ENCODE measurements at regions of chr17 and their contacts with region 1.

Region 1: GRCh38 chr17:2087597-2088211 is 32.8 kb downstream of the HIC1 start:
- DNase-seq: peak in 3 of 5 donors; percentile 59 to 68 (median 64)
- ATAC-seq: peak in 2 of 4 donors; percentile 1 to 17
- H3K4me3 ChIP-seq: no peak overlapping the region
- H3K27ac ChIP-seq: peak overlapping the region; percentile 1 to 93 (median 88)
- H3K4me1 ChIP-seq: peaks cover 22 to 96% (median 85%) of the 10 kb centered on the region in 12 donors
- H3K27me3 ChIP-seq: no peaks in the 10 kb centered on the region
- CTCF ChIP-seq: no peak
- POLR2A ChIP-seq: no peak

Region 2: GRCh38 chr17:2025622-2026310 is 61.9 kb before region 1 on chr17:
- intact Hi-C with region 1: no loop called
- DNase-seq: peak; percentile 75 to 85 (median 81)
- ATAC-seq: peak; percentile 38 to 65 (median 58)
- H3K4me3 ChIP-seq: peak overlapping the region; percentile 35 to 85 (median 62)
- H3K27ac ChIP-seq: peak overlapping the region in 11 of 12 donors; percentile 39 to 88 (median 64)
- H3K4me1 ChIP-seq: peaks cover 5 to 51% (median 30%) of the 10 kb centered on the region in 12 donors
- H3K27me3 ChIP-seq: peaks cover 0 to 51% (median 0%) of the 10 kb centered on the region in 9 donors
- CTCF ChIP-seq: peak; percentile 50 to 84 (median 72)
- POLR2A ChIP-seq: no peak

Region 3: DNA sequence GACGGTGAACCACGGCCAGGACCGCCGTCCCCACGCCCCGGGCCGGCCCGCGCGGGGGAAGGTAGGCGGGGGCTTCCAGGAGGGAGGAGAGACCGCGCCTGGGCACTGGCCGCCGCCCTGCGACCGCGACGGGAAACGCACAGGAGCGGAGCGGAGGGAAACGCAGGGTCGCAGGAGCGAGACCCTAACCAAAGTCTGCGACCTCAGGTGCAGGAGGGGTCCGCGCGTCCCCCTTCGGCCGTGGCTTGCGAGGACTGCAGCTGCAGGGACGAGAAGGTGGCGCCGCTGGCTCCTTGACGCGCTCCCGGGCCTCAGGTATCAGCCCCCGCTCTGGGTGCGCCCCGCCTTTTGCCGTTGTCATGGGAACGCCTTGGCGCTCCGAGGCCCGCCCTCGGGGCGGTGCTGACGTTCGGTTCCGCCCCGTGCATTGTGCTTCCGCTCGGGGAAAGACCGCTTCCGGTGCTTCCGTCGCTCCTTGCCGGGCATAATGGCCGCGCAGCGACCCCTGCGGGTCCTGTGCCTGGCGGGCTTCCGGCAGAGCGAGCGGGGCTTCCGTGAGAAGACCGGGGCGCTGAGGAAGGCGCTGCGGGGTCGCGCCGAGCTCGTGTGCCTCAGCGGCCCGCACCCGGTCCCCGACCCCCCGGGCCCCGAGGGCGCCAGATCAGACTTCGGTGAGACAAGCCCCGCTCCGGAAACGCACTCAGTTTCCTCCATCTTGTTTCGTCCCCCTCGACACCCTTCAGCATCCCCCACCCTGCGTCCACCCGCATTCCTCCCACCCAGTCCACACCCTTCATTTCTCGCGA is 45.9 kb before region 1 on chr17 and contains the start of gene OVCA2:
- intact Hi-C with region 1: no loop called
- DNase-seq: peak; percentile 95 to 97 (median 95)
- ATAC-seq: peak; percentile 77 to 96 (median 93)
- H3K4me3 ChIP-seq: peak within 1 kb of the TSS; percentile 43 to 87 (median 76)
- H3K27ac ChIP-seq: peak within 1 kb of the TSS; percentile 81 to 97 (median 93)
- H3K4me1 ChIP-seq: peaks cover 3 to 38% (median 22%) of the 10 kb centered on the region in 12 donors
- H3K27me3 ChIP-seq: no peaks in the 10 kb centered on the region
- CTCF ChIP-seq: peak; percentile 35 to 81 (median 65)
- POLR2A ChIP-seq: peak in 1 of 2 donors; percentile 77
- total RNA-seq, gene OVCA2: 16.0 to 30.2 (median 20.0) TPM

Region 4: GRCh38 chr17:2064980-2065785 is 22.5 kb before region 1 on chr17:
- intact Hi-C with region 1: loop called in 2 of 10 experiments (anchors 2 kb)
- DNase-seq: peak in 4 of 5 donors; percentile 57 to 79 (median 66)
- ATAC-seq: peak in 3 of 4 donors; percentile 8 to 31 (median 17)
- H3K4me3 ChIP-seq: no peak overlapping the region
- H3K27ac ChIP-seq: peak overlapping the region in 11 of 12 donors; percentile 67 to 98 (median 93)
- H3K4me1 ChIP-seq: peaks cover 3 to 94% (median 85%) of the 10 kb centered on the region in 12 donors
- H3K27me3 ChIP-seq: peaks cover 0 to 6% (median 0%) of the 10 kb centered on the region in 9 donors
- CTCF ChIP-seq: peak in 9 of 12 donors; percentile 5 to 56 (median 23)
- POLR2A ChIP-seq: no peak

Region 5: GRCh38 chr17:2122641-2123302 is 35.1 kb after region 1 on chr17:
- intact Hi-C with region 1: loop called in 1 of 10 experiments (anchors 5 kb)
- DNase-seq: peak; percentile 40 to 80 (median 80)
- ATAC-seq: peak; percentile 64 to 87 (median 78)
- H3K4me3 ChIP-seq: peak overlapping the region in 5 of 12 donors; percentile 2 to 23 (median 10)
- H3K27ac ChIP-seq: peak overlapping the region; percentile 57 to 86 (median 72)
- H3K4me1 ChIP-seq: peaks cover 5 to 47% (median 29%) of the 10 kb centered on the region in 12 donors
- H3K27me3 ChIP-seq: no peaks in the 10 kb centered on the region
- CTCF ChIP-seq: peak in 3 of 12 donors; percentile 19 to 36 (median 23)
- POLR2A ChIP-seq: no peak

Region 6: GRCh38 chr17:2521257-2521656 is 433.6 kb after region 1 on chr17:
- intact Hi-C with region 1: no loop called
- DNase-seq: no peak
- ATAC-seq: no peak
- H3K4me3 ChIP-seq: no peak overlapping the region
- H3K27ac ChIP-seq: no peak overlapping the region
- H3K4me1 ChIP-seq: peaks cover 0 to 5% (median 0%) of the 10 kb centered on the region in 12 donors
- H3K27me3 ChIP-seq: no peaks in the 10 kb centered on the region
- CTCF ChIP-seq: no peak
- POLR2A ChIP-seq: no peak

Measured in heart left ventricle (tissue), 16 donors.